PC-9 (cell line): ENCODE measurements at regions of chr9 and their contacts with region 1.

Region 1: GRCh38 chr9:125066839-125067619 is 76.3 kb downstream of the SCAI start:
- DNase-seq: no peak
- H3K4me3 ChIP-seq: no peak overlapping the region
- H3K27ac ChIP-seq: no peak overlapping the region
- H3K4me1 ChIP-seq: no peaks in the 10 kb centered on the region
- H3K27me3 ChIP-seq: no peaks in the 10 kb centered on the region
- CTCF ChIP-seq: no peak

Region 2: DNA sequence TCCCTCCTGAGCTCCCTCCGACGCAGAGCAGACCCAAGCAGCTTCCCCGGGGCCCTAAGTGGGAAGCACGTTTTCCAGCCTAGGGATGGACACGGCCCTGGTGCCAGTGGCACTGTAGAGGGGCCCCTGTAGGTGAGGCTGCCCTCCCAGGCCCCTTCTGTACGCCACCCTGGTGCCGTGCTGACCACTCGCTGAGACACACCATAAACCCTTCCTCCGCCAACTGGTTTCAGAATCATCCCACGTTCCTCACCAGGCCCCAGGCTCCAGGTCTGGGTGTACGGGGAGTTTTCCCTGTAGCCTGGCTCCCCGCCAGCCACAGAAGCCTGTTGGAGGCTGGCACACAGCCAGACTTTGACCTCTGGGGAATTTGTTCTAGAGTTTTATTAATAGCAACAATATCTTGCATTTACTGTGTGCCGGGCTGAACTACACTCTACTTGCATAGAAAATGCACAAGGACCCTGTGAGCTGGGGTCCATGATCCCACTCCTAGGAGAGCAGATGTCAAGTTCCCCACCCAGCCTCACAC is 231.9 kb before region 1 on chr9:
- CTCF ChIA-PET with region 1: no interaction called
- POLR2A ChIA-PET with region 1: no interaction called
- intact Hi-C with region 1: no loop called
- DNase-seq: peak; percentile 66 to 84
- H3K4me3 ChIP-seq: peak overlapping the region; percentile 2; the same call in 1 of the 2 replicates
- H3K27ac ChIP-seq: peak overlapping the region; percentile 59
- H3K4me1 ChIP-seq: peaks cover 20% of the 10 kb centered on the region
- H3K27me3 ChIP-seq: no peaks in the 10 kb centered on the region
- CTCF ChIP-seq: no peak

Region 3: GRCh38 chr9:125089331-125089730 is 22.3 kb after region 1 on chr9:
- CTCF ChIA-PET with region 1: no interaction called
- POLR2A ChIA-PET with region 1: interaction called, 11 read pairs
- intact Hi-C with region 1: no loop called
- DNase-seq: no peak
- H3K4me3 ChIP-seq: no peak overlapping the region
- H3K27ac ChIP-seq: no peak overlapping the region
- H3K4me1 ChIP-seq: no peaks in the 10 kb centered on the region
- H3K27me3 ChIP-seq: no peaks in the 10 kb centered on the region
- CTCF ChIP-seq: no peak

Region 4: GRCh38 chr9:126275386-126276001 is 1208.5 kb after region 1 on chr9:
- CTCF ChIA-PET with region 1: no interaction called
- POLR2A ChIA-PET with region 1: no interaction called
- intact Hi-C with region 1: no loop called
- DNase-seq: no peak
- H3K4me3 ChIP-seq: no peak overlapping the region
- H3K27ac ChIP-seq: no peak overlapping the region
- H3K4me1 ChIP-seq: no peaks in the 10 kb centered on the region
- H3K27me3 ChIP-seq: peaks cover 20% of the 10 kb centered on the region
- CTCF ChIP-seq: no peak